ENCODE measurements at regions of chr13 and their contacts with region 1.

Region 1: DNA sequence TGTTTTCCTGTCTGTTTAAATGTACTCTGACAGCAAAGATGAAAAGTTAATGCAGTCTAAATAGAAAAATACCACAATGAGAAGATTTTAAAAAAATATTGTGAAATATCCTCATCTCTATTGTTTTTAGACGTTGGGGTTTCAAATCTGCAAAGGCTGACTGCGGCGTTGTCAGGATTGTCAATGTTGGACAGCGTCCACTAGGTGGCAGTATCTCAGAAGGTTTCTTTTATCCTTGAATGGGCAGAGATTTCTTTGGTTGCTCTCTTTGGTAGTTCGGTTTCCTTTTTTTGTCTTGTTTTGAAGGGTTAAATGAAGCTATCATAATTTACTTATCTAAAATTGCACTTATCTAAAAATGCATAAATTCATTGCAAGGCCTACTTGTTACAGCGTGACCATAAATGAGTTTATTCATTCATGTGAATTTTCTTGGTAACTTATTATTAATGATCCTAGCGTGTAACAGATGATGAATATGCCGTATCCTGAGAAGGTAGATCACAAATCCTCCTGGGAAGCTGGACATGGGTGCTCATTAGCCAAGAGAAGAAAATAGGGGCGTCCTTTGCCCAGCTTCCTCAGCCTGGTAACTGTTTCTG is 21.1 kb downstream of the TNFSF11 start:
- DNase-seq: no peak
- H3K4me3 ChIP-seq: no peak overlapping the region
- CTCF ChIP-seq: peak; percentile 60

Region 2: DNA sequence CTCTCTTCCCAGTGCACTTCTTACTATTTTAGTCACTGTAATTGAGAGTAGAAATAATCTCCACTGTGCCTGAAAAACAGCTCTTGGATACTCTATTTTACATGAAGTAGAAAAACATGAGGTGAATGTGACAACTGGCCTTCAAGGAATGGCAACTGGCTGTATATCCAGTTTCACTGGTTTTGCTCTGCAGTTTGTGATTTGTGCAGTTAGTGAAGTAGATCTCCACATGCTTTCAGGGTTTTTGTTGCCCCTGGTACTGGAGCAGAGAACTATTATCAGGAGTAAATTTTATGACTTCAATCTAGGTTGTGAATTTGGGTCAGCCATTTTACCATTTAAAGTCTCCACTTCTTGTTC is 154.9 kb before region 1 on chr13:
- CTCF ChIA-PET with region 1: no interaction called
- POLR2A ChIA-PET with region 1: no interaction called
- DNase-seq: no peak
- H3K4me3 ChIP-seq: no peak overlapping the region
- CTCF ChIP-seq: no peak

Region 3: GRCh38 chr13:42580644-42581043 is 14.4 kb before region 1 on chr13:
- CTCF ChIA-PET with region 1: interaction called, 10 read pairs
- POLR2A ChIA-PET with region 1: no interaction called
- DNase-seq: no peak
- H3K4me3 ChIP-seq: no peak overlapping the region
- CTCF ChIP-seq: no peak

Region 4: GRCh38 chr13:42626176-42626865 is 31.2 kb after region 1 on chr13:
- CTCF ChIA-PET with region 1: no interaction called
- POLR2A ChIA-PET with region 1: no interaction called
- DNase-seq: no peak
- H3K4me3 ChIP-seq: no peak overlapping the region
- CTCF ChIP-seq: no peak

Region 5: DNA sequence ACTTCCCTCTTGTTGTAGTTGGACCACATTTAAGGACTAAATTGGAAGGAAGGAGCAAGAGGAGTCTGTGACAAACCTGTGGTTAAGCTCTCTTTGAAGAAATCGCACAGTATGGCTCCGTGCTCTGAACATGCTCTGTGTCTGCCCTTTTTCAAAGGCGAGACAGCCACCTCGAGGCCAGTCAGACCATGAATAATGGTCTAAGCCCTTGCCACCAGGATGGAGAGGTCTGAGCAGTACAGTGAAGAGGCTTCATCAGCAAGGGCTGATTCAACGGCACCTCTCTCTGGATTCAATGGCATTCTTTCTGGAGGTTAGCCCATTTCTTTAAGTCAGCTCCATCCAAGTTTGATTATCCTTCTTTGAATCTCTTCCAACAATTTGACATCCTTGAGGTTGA is 217.2 kb after region 1 on chr13:
- CTCF ChIA-PET with region 1: interaction called, 15 read pairs
- POLR2A ChIA-PET with region 1: no interaction called
- DNase-seq: no peak
- H3K4me3 ChIP-seq: no peak overlapping the region
- CTCF ChIP-seq: no peak

Region 6: DNA sequence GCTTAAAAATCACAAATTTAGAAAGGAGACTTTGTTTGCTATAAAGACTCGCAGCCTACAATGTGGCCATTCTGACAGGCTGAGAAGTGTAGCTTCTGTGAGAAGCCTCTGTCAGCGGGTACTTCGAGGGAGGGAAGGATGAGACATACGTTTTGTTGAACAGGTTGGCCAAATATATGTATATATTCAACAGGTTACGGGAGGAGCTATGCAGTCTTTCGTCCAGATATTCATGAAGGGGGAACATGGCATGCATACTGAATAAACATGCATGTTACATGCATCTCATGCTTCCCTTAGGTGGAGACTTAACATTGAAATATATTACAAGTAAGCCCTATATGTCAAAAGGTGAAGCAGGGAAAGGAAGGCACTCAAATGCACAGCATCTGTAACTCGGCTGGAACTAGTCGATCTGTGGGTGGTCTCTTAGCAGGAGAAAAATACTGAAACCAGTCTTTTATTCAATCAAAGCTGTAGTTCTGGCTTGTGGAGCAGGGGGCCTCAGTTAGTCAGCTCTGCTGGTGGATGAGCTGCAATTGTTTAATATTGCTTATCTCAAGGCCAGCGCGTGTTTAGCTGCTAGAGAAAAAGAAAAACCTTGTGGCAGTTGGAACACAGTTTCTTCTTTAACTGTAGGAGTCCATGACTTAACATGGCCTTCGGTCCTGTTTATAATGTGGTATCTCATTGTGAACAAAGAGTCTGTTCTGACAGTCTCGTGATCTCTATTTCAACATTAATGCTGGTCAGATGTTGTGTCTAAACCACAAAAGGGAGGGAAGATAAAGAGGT is 280.6 kb after region 1 on chr13:
- CTCF ChIA-PET with region 1: interaction called, 12 read pairs
- POLR2A ChIA-PET with region 1: no interaction called
- DNase-seq: no peak
- H3K4me3 ChIP-seq: no peak overlapping the region
- CTCF ChIP-seq: peak; percentile 32

Measured in AG04449 (cell line).